Calu3 (cell line): ENCODE measurements at regions of chrX and their contacts with region 1.

Region 1: GRCh38 chrX:96372313-96373046 is 312.2 kb upstream of the DIAPH2 start:
- DNase-seq: peak; percentile 24
- H3K4me3 Mint-ChIP-seq: no peak overlapping the region
- H3K27ac Mint-ChIP-seq: no peak overlapping the region
- H3K4me1 Mint-ChIP-seq: no peaks in the 10 kb centered on the region
- H3K27me3 Mint-ChIP-seq: no peaks in the 10 kb centered on the region
- CTCF ChIP-seq: peak; percentile 43

Region 2: DNA sequence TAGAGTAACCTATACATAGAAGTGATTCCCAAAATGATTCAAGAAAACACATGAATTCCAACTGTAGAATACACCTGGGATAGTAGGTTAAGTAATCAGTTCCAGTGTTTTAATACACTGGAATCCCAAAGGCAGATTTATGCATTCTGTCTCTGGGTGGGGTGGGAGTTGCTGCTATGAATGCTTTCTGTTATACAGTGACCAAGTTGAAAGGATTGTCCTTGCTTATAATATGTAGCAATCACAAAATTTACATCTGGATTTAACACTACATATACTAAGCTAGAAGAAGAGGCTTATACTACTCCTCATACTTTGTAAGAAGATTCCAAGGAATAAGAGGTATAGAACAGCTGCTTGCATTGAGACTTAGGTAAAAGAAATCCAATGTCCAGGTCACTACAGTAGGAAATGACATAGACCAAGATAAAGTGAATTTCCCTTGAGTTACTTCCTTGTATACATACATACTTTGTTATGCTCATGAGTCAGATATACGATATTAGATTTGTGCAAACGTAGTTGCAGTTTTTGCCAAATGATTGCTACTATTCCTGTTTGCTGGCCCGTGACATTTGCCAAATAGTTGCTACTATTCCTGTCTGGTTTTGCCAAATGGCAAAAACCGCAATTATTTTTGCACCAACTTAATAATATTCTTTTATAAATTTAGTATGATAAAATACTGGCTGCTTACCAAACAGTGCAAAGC is 101.7 kb after region 1 on chrX:
- CTCF ChIA-PET with region 1: no interaction called
- intact Hi-C with region 1: no loop called
- DNase-seq: peak; percentile 12
- H3K4me3 Mint-ChIP-seq: no peak overlapping the region
- H3K27ac Mint-ChIP-seq: peak overlapping the region; percentile 66
- H3K4me1 Mint-ChIP-seq: peaks cover 15% of the 10 kb centered on the region
- H3K27me3 Mint-ChIP-seq: no peaks in the 10 kb centered on the region
- CTCF ChIP-seq: no peak

Region 3: DNA sequence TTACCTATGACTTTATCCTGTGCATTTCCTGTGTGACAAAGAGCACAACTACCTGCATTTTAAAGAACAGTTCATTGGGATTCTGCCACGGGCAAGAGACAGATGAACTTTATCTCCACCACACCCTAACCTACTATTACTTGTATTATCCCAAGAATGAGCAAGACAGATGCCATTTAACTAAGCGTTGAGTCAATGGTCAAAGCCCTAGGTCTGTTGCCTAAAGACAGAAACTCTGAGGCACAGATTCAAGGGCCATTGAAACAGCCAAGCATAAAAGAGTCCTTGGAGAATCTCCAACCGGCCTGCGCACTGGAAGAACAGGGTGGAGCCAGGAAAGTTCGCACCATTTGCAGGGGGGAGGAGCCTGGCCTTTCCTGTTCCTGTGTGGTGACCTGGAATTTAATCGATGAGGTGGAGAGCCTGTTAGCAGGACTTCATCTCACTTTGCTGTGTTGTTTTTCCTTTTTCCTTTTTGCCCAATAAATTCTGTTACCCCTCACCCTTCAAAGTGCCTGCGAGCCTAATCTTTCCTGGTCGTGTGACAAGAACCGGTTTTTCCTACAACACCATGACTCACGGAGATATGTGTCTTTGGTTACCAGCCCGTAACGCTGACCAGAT is 165.7 kb after region 1 on chrX:
- CTCF ChIA-PET with region 1: no interaction called
- intact Hi-C with region 1: loop called (anchors 5 kb)
- DNase-seq: peak; percentile 59
- H3K4me3 Mint-ChIP-seq: peak overlapping the region; percentile 69
- H3K27ac Mint-ChIP-seq: peak overlapping the region; percentile 96
- H3K4me1 Mint-ChIP-seq: peaks cover 13% of the 10 kb centered on the region
- H3K27me3 Mint-ChIP-seq: no peaks in the 10 kb centered on the region
- CTCF ChIP-seq: no peak

Region 4: DNA sequence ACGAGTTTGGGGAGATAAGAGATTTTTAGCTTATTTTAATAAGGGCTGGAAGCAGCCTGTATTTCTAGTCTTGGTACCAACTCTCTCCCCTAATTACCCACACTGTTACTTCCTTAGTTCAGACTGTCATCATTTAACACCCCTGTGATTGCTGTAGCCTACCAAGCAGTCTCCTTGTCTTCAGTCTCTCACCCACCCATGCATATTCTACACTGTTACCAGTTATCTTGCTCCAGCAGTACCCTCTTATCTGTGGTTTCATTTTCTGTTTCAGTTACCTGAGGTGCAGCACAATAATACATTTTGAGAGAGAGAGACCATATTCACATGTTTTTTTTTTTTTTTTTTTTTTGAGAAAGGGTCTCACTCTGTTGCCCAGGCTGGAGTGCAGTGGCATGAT is 392.4 kb after region 1 on chrX:
- CTCF ChIA-PET with region 1: no interaction called
- intact Hi-C with region 1: loop called (anchors 5 kb)
- DNase-seq: no peak
- H3K4me3 Mint-ChIP-seq: no peak overlapping the region
- H3K27ac Mint-ChIP-seq: no peak overlapping the region
- H3K4me1 Mint-ChIP-seq: peaks cover 25% of the 10 kb centered on the region
- H3K27me3 Mint-ChIP-seq: no peaks in the 10 kb centered on the region
- CTCF ChIP-seq: no peak